ENCODE measurements at regions of chr17 and their contacts with region 1.

Region 1: DNA sequence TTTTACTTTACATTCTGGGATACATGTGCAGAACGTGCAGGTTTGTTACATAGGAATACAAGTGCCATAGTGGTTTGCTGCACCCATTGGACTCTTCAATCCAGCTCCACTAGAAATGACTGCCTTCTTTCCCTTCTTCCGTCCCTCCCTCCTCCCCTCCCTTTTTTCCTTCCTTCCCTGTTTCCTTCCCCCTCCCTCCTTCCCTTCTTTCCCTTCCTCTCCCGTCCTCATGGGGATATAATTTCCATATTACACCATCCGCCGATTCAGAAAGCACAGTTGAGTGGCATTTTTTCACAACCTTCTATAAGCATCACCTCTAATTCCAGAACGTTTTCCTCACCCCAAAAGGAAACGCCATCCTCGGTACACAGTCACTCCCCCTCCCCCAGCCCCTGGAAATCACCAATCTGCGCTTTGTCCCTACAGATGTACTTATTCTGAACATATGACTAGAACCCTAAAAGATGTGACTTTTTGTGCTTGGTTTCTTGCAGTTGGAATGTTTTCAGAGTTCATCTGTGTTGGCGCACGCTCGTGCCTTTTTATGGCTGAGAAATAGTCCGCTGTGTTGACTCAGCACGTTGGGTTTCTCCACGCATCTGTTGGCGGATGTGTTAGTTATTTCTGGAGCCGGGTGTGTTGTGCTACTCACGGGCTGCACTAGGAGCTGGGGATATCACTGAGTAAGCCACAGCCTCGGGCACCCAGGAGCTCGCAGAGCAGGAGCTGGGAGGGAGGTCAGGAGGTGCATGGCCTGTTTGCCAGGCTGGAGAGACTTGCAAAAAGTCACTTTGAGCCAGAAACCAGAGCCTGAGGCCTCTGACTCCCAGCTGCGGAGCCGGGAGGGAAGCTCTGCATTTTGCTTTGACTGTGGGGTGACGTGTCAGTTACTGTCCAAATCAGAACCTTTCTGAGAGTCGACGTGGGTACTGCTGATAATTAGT is 336.4 kb downstream of the SEC14L1 start:
- DNase-seq: peak; percentile 98
- H3K4me3 Mint-ChIP-seq: peak overlapping the region; percentile 60
- H3K27ac Mint-ChIP-seq: peak overlapping the region; percentile 81
- H3K4me1 Mint-ChIP-seq: peaks cover 54% of the 10 kb centered on the region
- H3K27me3 Mint-ChIP-seq: no peaks in the 10 kb centered on the region
- CTCF ChIP-seq: no peak

Region 2: GRCh38 chr17:77096570-77097214 is 380.5 kb before region 1 on chr17:
- CTCF ChIA-PET with region 1: no interaction called
- POLR2A ChIA-PET with region 1: no interaction called
- intact Hi-C with region 1: no loop called
- DNase-seq: peak; percentile 49
- H3K4me3 Mint-ChIP-seq: no peak overlapping the region
- H3K27ac Mint-ChIP-seq: no peak overlapping the region
- H3K4me1 Mint-ChIP-seq: no peaks in the 10 kb centered on the region
- H3K27me3 Mint-ChIP-seq: no peaks in the 10 kb centered on the region
- CTCF ChIP-seq: peak; percentile 66

Region 3: GRCh38 chr17:77319211-77320043 is 157.8 kb before region 1 on chr17:
- CTCF ChIA-PET with region 1: no interaction called
- POLR2A ChIA-PET with region 1: interaction called, 19 read pairs
- intact Hi-C with region 1: no loop called
- DNase-seq: peak; percentile 90
- H3K4me3 Mint-ChIP-seq: peak overlapping the region; percentile 88
- H3K27ac Mint-ChIP-seq: peak overlapping the region; percentile 89
- H3K4me1 Mint-ChIP-seq: peaks cover 46% of the 10 kb centered on the region
- H3K27me3 Mint-ChIP-seq: no peaks in the 10 kb centered on the region
- CTCF ChIP-seq: no peak

Region 4: DNA sequence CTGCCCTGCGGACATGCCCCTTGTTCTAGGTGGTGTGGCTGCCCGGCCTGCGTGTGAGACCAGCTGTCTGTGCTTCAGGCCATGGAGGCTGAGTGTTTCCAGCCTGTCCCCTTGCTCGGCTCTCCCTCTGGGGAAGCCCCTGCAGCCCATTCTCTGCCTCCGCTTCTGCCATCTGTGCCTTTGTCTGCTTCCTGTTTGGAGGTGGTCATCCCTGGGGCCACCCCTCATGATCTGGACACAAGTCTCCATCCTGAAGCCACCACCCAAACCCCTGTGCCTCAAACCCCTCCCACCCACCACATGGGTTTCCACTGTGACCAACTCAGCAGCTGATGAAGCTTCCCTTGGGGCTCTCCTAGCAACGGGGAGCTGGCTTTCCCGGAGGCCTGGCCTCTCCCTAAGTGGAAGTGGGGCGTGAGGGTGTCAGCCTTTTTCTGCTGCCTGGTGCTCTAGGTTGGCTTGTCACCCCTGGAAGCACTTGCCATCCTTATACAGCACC is 151.6 kb before region 1 on chr17:
- CTCF ChIA-PET with region 1: interaction called, 3 read pairs
- POLR2A ChIA-PET with region 1: interaction called, 19 read pairs
- intact Hi-C with region 1: loop called (anchors 5 kb)
- DNase-seq: no peak
- H3K4me3 Mint-ChIP-seq: peak overlapping the region; percentile 88
- H3K27ac Mint-ChIP-seq: peak overlapping the region; percentile 95
- H3K4me1 Mint-ChIP-seq: peaks cover 49% of the 10 kb centered on the region
- H3K27me3 Mint-ChIP-seq: no peaks in the 10 kb centered on the region
- CTCF ChIP-seq: no peak

Region 5: GRCh38 chr17:77331301-77331864 is 145.8 kb before region 1 on chr17:
- CTCF ChIA-PET with region 1: interaction called, 3 read pairs
- POLR2A ChIA-PET with region 1: interaction called, 11 read pairs
- intact Hi-C with region 1: loop called (anchors 5 kb)
- DNase-seq: peak; percentile 89
- H3K4me3 Mint-ChIP-seq: peak overlapping the region; percentile 48
- H3K27ac Mint-ChIP-seq: peak overlapping the region; percentile 46
- H3K4me1 Mint-ChIP-seq: peaks cover 33% of the 10 kb centered on the region
- H3K27me3 Mint-ChIP-seq: no peaks in the 10 kb centered on the region
- CTCF ChIP-seq: peak; percentile 97

Region 6: DNA sequence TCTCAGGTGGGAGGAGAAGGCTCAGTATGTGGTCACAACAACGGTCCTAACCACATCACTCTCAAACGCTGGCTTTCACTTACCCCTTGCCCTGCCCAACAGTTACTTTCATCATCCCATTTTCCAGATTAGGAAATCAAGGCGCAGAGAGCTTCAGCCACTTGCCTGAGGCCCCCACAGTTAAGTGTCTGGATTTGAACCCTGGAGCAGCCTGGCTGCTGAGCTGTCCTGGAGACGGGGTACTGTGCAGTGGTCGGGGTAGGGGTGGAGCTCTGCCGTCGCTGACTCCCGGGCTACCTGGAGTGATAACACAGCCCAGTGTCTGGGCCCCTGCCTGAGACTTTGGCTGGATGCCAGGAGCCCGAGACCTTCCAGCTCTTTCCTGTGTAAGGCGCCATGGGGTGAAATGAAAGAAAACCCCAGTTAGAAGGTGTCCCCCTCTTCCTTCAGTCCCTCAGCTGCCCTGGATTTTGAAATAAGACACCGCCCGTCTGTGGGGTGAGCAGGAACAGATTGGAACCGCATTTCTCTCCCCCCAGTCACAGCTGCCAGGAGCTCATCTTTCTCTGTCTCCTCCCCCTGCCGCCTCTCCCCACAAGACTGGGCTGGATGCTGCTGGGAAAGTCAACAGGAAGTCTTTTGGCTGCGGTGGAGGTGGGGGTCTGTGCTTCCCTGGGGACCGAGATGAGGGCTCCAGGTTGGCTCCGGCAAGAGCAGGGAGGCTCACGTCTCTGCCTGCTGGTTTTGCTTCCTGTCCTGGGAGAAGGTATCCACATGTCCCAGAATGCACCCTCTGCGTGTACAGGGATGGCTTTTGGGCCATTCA is 56.2 kb before region 1 on chr17:
- CTCF ChIA-PET with region 1: interaction called, 4 read pairs
- POLR2A ChIA-PET with region 1: interaction called, 33 read pairs
- intact Hi-C with region 1: no loop called
- DNase-seq: peak; percentile 82
- H3K4me3 Mint-ChIP-seq: peak overlapping the region; percentile 25
- H3K27ac Mint-ChIP-seq: peak overlapping the region; percentile 22
- H3K4me1 Mint-ChIP-seq: peaks cover 34% of the 10 kb centered on the region
- H3K27me3 Mint-ChIP-seq: no peaks in the 10 kb centered on the region
- CTCF ChIP-seq: no peak

Region 7: DNA sequence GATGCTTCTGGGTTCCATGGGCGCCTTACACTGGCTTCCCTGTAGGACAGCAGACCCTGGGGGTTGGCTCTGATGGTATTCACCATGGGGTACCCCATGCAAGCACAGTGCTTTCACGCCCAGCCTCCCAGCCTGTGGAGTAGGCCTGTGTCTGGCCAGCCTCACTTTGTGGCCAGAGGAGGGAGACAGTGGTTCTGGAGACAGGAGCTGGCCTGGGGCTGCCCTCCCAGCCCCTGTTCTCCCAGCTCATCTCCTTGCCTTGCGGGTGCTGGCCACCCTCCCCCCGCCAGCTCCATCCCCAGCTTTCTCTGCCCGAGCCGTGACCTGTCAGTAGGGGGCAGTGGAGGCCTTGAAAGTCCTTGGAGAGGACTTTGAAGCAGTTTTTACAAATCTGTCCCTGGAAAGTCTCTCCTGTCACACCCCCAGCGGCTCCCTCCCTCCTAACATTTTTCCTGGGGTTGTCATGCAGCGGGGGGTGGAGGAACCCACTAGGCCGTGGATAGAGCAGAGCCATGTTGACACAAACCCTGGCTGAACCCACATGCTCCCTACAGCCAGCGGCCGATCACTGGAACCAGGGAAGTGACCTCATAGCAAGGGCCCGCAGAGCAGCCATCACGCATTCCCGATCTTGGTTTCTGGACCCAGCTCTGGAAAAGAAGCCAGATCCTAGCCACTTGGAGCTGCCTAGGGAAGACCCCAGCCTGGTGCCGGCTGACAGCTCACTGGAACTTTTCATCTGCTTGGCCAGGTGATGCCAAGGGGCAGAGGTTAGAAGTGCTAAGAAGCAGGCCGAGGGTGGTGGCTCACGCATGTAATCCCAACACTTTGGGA is 47.1 kb before region 1 on chr17:
- CTCF ChIA-PET with region 1: interaction called, 7 read pairs
- POLR2A ChIA-PET with region 1: interaction called, 33 read pairs
- intact Hi-C with region 1: loop called (anchors 1 kb)
- DNase-seq: peak; percentile 83
- H3K4me3 Mint-ChIP-seq: no peak overlapping the region
- H3K27ac Mint-ChIP-seq: no peak overlapping the region
- H3K4me1 Mint-ChIP-seq: peaks cover 26% of the 10 kb centered on the region
- H3K27me3 Mint-ChIP-seq: no peaks in the 10 kb centered on the region
- CTCF ChIP-seq: peak; percentile 75

Region 8: GRCh38 chr17:77451245-77451893 is 25.8 kb before region 1 on chr17:
- CTCF ChIA-PET with region 1: interaction called, 3 read pairs
- POLR2A ChIA-PET with region 1: interaction called, 167 read pairs
- intact Hi-C with region 1: no loop called
- DNase-seq: no peak
- H3K4me3 Mint-ChIP-seq: peak overlapping the region; percentile 64
- H3K27ac Mint-ChIP-seq: peak overlapping the region; percentile 75
- H3K4me1 Mint-ChIP-seq: peaks cover 55% of the 10 kb centered on the region
- H3K27me3 Mint-ChIP-seq: no peaks in the 10 kb centered on the region
- CTCF ChIP-seq: no peak

Region 9: DNA sequence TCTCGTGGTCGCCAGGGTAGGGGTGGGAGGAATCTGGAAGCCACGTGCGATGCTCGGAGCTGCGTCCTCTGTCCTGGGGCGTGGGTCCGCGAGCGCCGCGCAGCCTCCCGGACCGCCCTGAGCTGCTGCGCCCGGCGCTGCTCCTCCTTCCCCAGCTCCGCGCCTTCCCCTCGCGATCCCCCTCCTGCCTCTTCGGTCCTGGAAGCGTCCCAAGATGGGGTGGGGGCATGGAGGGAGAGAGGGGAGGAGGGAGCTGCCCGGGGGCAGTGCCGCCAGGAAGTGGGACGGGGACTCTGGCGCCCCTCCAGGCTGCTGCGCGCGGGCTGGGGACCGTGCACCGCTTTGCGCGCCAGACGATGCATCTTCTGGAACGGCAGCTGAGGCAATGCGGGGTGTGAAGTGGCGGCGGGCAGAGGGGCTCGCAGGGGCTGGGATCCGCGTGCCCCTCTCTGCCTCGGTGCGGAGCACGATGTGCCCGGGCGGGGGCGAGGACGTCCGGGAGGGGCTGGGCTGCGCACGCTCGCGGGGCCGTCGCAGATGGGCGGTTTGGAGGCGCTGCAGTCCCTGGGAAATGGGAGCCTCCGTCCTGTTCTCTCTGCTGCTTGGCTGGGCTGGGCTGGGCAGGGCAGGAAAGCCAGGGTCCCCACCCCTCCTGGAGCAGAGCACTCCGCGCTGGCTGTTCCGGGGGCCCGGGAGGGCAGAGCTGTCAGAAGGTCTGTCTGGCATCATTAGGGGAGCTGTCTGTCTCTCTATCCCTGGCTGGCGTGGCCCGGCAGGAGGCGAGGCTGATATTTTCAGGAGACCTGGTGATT is 51.5 kb after region 1 on chr17:
- CTCF ChIA-PET with region 1: no interaction called
- POLR2A ChIA-PET with region 1: no interaction called
- intact Hi-C with region 1: no loop called
- DNase-seq: no peak
- H3K4me3 Mint-ChIP-seq: no peak overlapping the region
- H3K27ac Mint-ChIP-seq: no peak overlapping the region
- H3K4me1 Mint-ChIP-seq: no peaks in the 10 kb centered on the region
- H3K27me3 Mint-ChIP-seq: no peaks in the 10 kb centered on the region
- CTCF ChIP-seq: no peak